Right ventricle myocardium superior (tissue), 1 donor: ENCODE measurements at regions of chr16 and their contacts with region 1.

Region 1: GRCh38 chr16:64455254-64455653 is 666.6 kb downstream of the CDH11 start:
- DNase-seq: no peak
- ATAC-seq: peak; percentile 51

Region 2: DNA sequence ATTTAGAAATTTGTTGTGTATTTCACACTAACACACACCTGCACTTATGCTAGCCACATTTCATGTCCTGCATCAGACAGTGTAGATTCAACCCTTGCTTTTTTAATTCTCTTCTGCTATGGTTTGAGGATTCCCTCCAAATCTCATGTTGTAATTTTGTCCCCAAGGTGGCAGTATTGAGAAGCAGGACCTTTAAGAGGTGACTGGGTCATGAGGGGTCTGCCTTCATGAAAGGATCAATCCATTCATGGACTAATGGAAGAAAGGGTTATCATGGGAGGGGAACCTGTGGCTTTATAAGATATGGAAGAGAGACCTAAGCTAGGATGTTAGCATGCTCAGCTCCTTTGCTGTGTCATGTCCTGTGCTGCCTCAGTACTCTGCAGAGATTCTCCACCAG is 365.6 kb before region 1 on chr16:
- intact Hi-C with region 1: loop called (anchors 10 kb)
- DNase-seq: no peak
- ATAC-seq: peak; percentile 49

Region 3: DNA sequence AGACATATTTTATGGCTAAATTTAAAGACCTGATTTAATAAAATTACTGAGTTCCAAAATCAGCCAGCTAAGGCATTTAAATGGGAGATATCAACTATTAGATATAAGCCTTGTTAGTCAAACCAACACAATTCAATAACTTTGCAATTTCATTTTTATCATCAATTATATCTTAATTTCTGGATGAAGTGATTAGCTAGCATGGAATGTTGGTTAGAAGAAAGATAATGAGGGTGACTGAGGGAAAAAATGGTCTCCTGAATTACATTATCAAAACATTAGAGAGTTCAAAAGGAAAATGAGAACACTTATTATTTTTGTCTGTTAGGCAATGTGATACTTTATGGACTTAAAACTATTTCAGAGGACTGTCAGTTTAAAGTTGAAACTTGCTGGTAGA is 140.9 kb after region 1 on chr16:
- intact Hi-C with region 1: no loop called
- DNase-seq: no peak
- ATAC-seq: no peak

Region 4: DNA sequence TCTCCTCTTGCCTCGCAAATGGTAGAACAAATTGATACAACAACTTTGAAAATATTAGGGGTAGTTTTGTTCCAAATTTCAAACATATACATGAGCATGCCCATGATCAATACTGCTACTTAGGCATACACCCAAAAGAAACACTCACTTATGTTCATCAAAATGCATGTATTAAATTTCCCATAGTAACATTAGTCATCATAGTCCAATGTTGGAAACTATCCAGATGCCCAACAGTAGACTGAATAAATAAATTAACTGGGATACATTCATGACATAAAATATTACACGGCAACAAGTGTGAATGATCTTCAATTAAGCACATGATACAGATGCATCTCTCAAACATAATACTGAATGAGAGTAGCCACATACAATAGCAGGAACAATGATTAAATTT is 275.0 kb after region 1 on chr16:
- intact Hi-C with region 1: no loop called
- DNase-seq: no peak
- ATAC-seq: no peak